Heart left ventricle (tissue), 16 donors: ENCODE measurements at regions of chr20 and their contacts with region 1.

Region 1: DNA sequence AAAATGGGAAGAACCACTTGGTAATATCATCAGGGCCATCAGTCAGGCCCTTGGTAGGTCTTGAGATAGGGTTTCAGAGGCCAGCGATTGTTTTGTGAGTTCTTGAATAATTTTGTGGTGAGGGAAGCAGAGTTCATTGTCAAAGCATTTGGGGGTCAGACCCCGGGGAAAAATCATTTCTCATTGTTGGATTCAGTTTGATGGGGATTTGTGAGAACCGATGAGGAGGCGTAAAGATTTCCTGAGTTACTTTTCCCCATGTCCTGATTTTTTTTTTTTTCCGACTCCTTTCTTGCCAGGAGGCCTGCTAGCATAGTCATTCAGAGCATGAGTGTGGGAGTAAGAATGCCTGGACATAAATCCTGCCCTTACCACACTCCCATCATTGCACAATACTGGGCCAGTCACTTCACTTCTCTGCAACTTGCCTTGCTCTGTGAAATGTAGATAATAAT is 60.3 kb downstream of the TSHZ2 start:
- DNase-seq: peak in 2 of 5 donors; percentile 28 to 38
- ATAC-seq: peak; percentile 67 to 97 (median 86)
- H3K4me3 ChIP-seq: no peak overlapping the region
- H3K27ac ChIP-seq: peak overlapping the region in 7 of 12 donors; percentile 3 to 60 (median 30)
- H3K4me1 ChIP-seq: peaks cover 0 to 16% (median 0%) of the 10 kb centered on the region in 12 donors
- H3K27me3 ChIP-seq: no peaks in the 10 kb centered on the region
- CTCF ChIP-seq: no peak
- POLR2A ChIP-seq: no peak

Region 2: DNA sequence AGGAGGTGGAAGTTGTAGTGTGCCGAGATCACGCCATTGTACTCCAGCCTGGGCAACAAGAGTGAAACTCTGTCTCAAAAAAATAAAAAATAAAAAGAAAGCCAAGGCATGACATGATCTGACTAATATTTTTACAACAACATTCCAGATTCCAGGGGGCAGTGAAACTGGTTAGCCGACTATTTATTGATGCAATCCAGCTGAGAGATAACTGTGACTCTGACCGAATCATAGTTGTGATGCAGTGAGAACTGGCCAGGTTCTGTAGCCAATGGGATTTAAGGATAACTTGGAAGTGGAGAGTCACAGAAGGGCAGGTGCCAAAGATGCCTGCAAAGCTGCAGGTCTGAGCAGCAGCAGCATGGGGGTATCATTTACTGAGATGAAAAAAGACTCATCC is 143.3 kb before region 1 on chr20:
- intact Hi-C with region 1: no loop called
- DNase-seq: no peak
- ATAC-seq: no peak
- H3K4me3 ChIP-seq: no peak overlapping the region
- H3K27ac ChIP-seq: no peak overlapping the region
- H3K4me1 ChIP-seq: no peaks in the 10 kb centered on the region
- H3K27me3 ChIP-seq: no peaks in the 10 kb centered on the region
- CTCF ChIP-seq: no peak
- POLR2A ChIP-seq: no peak

Region 3: DNA sequence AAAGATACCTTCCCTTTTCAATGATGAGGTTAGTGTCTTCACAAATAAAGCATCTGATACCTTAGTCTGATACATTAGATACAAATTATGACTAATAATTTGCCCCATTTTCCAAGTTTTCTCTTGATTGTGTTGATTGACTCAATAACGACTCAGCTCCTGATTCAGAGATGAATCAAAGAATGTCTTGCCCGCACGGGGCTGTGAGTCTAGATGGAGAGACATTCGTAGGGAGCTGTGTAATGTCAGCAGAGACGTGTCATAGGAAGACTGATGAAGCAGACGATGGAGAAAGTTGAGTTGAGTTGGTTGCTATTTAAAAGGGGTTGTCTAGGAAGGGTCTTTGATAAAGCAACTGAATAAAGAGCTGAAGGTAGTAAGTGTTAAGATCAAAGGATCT is 17.8 kb after region 1 on chr20:
- intact Hi-C with region 1: no loop called
- DNase-seq: no peak
- ATAC-seq: no peak
- H3K4me3 ChIP-seq: no peak overlapping the region
- H3K27ac ChIP-seq: no peak overlapping the region
- H3K4me1 ChIP-seq: no peaks in the 10 kb centered on the region
- H3K27me3 ChIP-seq: no peaks in the 10 kb centered on the region
- CTCF ChIP-seq: no peak
- POLR2A ChIP-seq: no peak

Region 4: DNA sequence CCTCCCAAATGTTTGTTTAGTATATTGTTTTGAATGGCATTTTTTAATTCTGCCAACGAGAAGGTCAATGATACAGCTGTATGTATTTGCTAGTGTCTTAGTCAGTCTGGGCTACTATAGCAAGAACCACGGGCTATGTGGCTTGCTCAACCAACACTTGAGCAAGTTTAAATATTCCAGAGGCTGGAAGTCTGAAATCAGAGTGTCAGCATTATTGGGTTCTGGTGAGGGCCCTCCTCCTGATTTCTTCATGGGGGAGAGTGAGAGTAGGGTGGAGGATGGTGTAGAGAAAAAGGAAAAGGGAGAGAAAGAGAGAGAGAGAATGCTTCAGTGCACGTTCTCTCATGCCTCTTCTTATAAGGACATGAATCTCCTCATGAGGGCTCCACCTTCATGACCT is 84.2 kb after region 1 on chr20:
- intact Hi-C with region 1: loop called in 1 of 10 experiments (anchors 10 kb)
- DNase-seq: no peak
- ATAC-seq: no peak
- H3K4me3 ChIP-seq: no peak overlapping the region
- H3K27ac ChIP-seq: no peak overlapping the region
- H3K4me1 ChIP-seq: no peaks in the 10 kb centered on the region
- H3K27me3 ChIP-seq: no peaks in the 10 kb centered on the region
- CTCF ChIP-seq: no peak
- POLR2A ChIP-seq: no peak